Mammary epithelial cell (primary cell): ENCODE measurements at regions of chr11 and their contacts with region 1.

Region 1: GRCh38 chr11:119101759-119102423 is at the start of gene DPAGT1:
- DNase-seq: peak; percentile 97
- H3K4me3 ChIP-seq: peak within 1 kb of the TSS; percentile 80 to 81 (median 81)
- H3K27ac ChIP-seq: peak within 1 kb of the TSS; percentile 91
- H3K4me1 ChIP-seq: peaks cover 19% of the 10 kb centered on the region
- H3K27me3 ChIP-seq: no peaks in the 10 kb centered on the region
- CTCF ChIP-seq: no peak
- total RNA-seq, gene DPAGT1: 22.2 to 49.3 TPM

Region 2: DNA sequence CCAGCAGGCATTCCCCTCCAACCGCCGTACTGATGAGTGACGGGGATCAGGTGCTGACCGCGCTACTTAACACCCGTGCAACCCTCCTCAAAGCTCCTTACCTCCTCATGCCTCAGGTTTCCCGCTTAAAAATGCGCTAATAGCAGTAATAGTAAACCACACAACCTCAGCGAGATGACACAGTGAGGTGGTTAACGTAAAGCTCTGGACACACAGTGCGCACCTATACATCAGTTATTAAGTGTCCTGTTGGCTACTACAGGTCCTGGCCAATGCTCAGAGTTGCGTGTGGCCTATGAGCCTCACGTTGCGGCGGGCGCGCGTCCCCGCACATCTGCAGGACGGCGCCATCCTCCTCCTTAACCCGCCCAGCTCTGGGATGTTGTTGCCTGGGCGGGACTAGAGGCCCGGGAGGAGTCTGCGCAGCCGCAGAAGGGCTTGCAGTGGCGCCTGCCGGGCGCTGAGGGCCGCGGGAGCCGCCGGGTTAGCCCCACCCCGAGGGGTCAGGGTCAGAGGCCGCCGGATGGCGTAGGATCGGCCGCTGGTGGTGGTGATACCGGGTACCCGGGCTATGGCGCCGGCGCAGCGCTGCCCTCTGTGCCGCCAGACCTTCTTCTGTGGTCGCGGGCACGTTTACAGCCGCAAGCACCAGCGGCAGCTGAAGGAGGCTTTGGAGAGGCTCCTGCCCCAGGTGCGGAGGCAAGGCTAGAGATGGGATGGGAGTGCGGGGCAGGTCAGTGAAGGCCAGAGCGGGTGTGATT is 104.1 kb before region 1 on chr11 and contains the start of gene CENATAC:
- CTCF ChIA-PET with region 1: no interaction called
- dilution Hi-C with region 1: no loop called
- in situ Hi-C with region 1: no loop called
- intact Hi-C with region 1: no loop called
- DNase-seq: peak; percentile 87
- H3K4me3 ChIP-seq: peak within 1 kb of the TSS; percentile 68 to 86 (median 80)
- H3K27ac ChIP-seq: peak within 1 kb of the TSS; percentile 81
- H3K4me1 ChIP-seq: peaks cover 30% of the 10 kb centered on the region
- H3K27me3 ChIP-seq: no peaks in the 10 kb centered on the region
- CTCF ChIP-seq: peak in 1 of 2 donors; percentile 17
- total RNA-seq, gene CENATAC: 37.8 to 46.9 TPM

Region 3: DNA sequence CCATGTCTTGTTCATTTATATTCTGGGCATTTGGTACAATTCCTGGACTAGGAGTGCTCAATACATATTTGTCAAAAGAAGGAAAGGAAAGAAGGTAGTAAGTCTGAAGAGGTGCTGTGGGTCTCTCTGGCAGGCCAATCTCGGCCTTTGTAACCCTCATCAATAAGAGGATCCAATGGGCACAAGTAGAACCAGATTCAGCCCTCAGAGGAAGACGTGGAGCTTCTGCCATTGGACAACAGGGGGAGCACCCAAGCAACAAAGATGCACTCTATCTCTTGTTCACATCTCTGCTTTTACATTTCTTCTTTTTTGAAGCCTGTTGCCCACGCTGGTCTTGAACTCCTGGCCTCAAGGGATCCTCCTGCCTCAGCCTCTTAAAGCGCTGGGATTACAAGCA is 36.5 kb before region 1 on chr11:
- CTCF ChIA-PET with region 1: no interaction called
- dilution Hi-C with region 1: no loop called
- in situ Hi-C with region 1: no loop called
- intact Hi-C with region 1: loop called (anchors 1 kb)
- DNase-seq: no peak
- H3K4me3 ChIP-seq: no peak overlapping the region
- H3K27ac ChIP-seq: no peak overlapping the region
- H3K4me1 ChIP-seq: peaks cover 10% of the 10 kb centered on the region
- H3K27me3 ChIP-seq: no peaks in the 10 kb centered on the region
- CTCF ChIP-seq: peak; percentile 56 to 61

Region 4: DNA sequence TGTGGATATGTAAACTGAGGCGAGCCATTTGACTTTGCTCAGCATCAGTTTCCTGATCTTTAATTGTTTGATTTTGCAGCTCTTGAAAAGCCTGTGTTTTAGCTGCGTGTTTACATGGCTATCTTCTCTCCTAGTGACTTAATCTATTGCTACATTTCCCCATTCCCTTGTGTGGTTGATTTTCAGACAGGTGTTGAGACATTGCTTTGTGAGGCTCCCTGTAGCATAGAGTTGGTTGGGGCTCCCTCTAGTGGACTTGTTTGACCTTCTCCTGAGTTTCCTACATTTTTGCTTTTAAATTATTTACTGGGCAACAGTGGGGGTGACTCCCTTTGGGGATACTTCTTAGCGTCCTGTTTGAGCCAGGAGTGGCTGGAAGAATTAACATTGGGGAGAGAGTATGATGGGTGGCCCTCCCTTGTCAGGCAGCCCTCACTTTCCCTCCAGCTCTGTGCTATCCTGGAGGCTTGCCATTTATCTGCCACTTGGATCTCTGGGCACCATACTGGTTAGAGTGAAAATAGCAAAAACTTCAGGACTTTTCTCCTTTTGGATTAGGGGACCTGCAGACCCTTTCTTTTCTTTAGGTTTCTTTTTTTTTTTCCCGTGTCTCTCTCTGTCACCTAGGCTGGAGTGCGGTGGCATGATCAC is 95.1 kb after region 1 on chr11:
- CTCF ChIA-PET with region 1: interaction called, 5 read pairs
- dilution Hi-C with region 1: no loop called
- in situ Hi-C with region 1: loop called in 1 of 2 experiments (anchors 5 kb)
- intact Hi-C with region 1: loop called (anchors 1 kb)
- DNase-seq: peak; percentile 80
- H3K4me3 ChIP-seq: no peak overlapping the region
- H3K27ac ChIP-seq: no peak overlapping the region
- H3K4me1 ChIP-seq: no peaks in the 10 kb centered on the region
- H3K27me3 ChIP-seq: no peaks in the 10 kb centered on the region
- CTCF ChIP-seq: peak; percentile 72 to 74

Region 5: DNA sequence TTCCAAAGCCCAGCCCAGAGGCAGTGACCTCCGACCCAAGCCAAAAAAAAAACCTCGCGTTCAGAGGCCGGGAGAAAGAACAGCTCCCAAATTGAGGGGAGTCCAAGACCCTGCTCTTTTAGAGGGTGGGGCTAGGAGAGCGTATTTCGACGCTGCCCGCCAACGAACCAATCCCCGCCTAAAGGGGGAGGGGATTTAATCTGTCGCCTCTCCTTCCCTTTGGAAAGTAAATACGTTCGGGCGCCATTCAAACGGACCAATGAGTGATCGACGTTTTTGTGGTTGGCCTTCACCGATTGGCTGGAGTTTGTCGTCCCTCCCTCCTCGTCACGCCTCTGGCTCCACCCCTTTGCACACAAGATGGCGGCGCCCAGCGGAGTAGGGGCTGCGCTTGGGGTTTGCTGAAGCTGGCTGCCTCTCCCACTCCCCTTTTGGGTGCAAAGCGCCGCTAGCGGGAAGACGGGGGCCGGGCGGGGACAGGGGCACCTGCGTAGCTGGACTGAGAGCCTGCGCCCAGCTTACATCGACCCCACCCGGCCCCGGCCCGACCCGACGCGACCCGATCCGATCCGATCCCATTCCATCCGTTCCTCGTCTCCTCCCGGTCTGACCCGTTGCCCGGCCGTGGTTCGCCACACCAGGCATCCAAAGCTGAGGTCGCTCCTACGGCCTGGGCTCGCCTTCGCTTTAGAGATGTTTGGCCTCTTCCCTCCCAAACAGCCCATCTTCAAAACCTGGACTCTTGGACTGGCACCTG is 232.5 kb after region 1 on chr11 and contains the start of gene RNF26:
- CTCF ChIA-PET with region 1: interaction called, 3 read pairs
- dilution Hi-C with region 1: no loop called
- in situ Hi-C with region 1: no loop called
- intact Hi-C with region 1: loop called (anchors 5 kb)
- DNase-seq: peak; percentile 95
- H3K4me3 ChIP-seq: peak within 1 kb of the TSS; percentile 63 to 97 (median 93)
- H3K27ac ChIP-seq: peak within 1 kb of the TSS; percentile 88
- H3K4me1 ChIP-seq: peaks cover 22% of the 10 kb centered on the region
- H3K27me3 ChIP-seq: no peaks in the 10 kb centered on the region
- CTCF ChIP-seq: no peak
- total RNA-seq, gene RNF26: 3.7 to 34.4 TPM